ENCODE measurements at regions of chr19 and their contacts with region 1.

Region 1: GRCh38 chr19:7355151-7355820 is 6.5 kb downstream of the ARHGEF18 start:
- DNase-seq: no peak
- ATAC-seq: no peak
- H3K4me3 Mint-ChIP-seq: no peak overlapping the region
- H3K27ac Mint-ChIP-seq: no peak overlapping the region
- H3K4me1 Mint-ChIP-seq: peaks cover 45% of the 10 kb centered on the region
- H3K27me3 Mint-ChIP-seq: no peaks in the 10 kb centered on the region

Region 2: GRCh38 chr19:7326105-7326877 is 29.0 kb before region 1 on chr19:
- CTCF ChIA-PET with region 1: interaction called, 10 read pairs
- POLR2A ChIA-PET with region 1: no interaction called
- DNase-seq: peak; percentile 56
- ATAC-seq: no peak
- H3K4me3 Mint-ChIP-seq: no peak overlapping the region
- H3K27ac Mint-ChIP-seq: no peak overlapping the region
- H3K4me1 Mint-ChIP-seq: no peaks in the 10 kb centered on the region
- H3K27me3 Mint-ChIP-seq: peaks cover 2% of the 10 kb centered on the region

Region 3: DNA sequence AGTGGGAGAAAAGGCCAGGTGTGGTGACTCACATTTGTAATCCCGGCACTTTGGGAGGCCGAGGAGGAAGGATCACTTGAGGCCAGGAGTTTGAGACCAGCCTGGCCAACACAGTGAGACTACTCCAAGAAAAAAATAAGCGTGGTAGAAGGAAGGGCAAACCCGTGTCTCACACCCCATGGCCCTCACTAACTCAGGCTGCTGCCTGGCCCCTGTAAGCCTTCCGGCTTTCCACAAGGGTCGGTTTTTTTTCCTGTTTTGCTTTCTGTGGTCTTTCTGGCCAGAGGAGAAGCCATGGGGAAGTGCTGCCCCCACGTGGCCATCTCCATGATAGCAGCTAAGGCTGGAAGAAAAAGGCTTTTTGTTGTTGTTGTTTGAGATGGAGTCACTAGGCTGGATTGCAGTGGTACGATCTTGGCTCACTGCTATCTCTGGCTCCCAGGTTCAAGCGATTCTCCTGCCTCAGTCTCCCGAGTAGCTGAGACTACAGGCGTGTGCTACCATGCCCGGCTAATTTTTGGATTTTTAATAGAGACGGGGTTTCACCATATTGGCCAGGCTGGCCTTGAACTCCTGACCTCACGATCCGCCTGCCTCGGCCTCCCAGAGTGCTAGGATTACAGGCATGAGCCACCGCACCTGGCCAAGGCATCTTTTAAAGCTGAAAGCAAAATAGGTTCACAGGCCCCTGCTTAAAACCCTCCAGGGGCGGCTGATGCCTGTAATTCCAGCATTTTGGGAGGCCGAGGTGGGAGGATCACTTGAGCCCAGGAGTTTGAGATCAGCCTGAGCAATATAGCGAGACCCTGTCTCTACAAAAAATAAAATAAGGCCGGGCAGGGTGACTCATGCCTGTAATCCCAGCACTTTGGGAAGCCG is 14.1 kb before region 1 on chr19:
- CTCF ChIA-PET with region 1: interaction called, 22 read pairs
- POLR2A ChIA-PET with region 1: interaction called, 5 read pairs
- DNase-seq: peak; percentile 88
- ATAC-seq: peak; percentile 24
- H3K4me3 Mint-ChIP-seq: no peak overlapping the region
- H3K27ac Mint-ChIP-seq: peak overlapping the region; percentile 61
- H3K4me1 Mint-ChIP-seq: peaks cover 53% of the 10 kb centered on the region
- H3K27me3 Mint-ChIP-seq: no peaks in the 10 kb centered on the region

Region 4: GRCh38 chr19:7366701-7367420 is 11.6 kb after region 1 on chr19:
- CTCF ChIA-PET with region 1: interaction called, 26 read pairs
- POLR2A ChIA-PET with region 1: no interaction called
- DNase-seq: peak; percentile 54
- ATAC-seq: peak; percentile 67
- H3K4me3 Mint-ChIP-seq: no peak overlapping the region
- H3K27ac Mint-ChIP-seq: no peak overlapping the region
- H3K4me1 Mint-ChIP-seq: no peaks in the 10 kb centered on the region
- H3K27me3 Mint-ChIP-seq: no peaks in the 10 kb centered on the region

Region 5: GRCh38 chr19:7373862-7374261 is 18.6 kb after region 1 on chr19:
- CTCF ChIA-PET with region 1: interaction called, 17 read pairs
- POLR2A ChIA-PET with region 1: interaction called, 4 read pairs
- DNase-seq: no peak
- ATAC-seq: no peak
- H3K4me3 Mint-ChIP-seq: no peak overlapping the region
- H3K27ac Mint-ChIP-seq: no peak overlapping the region
- H3K4me1 Mint-ChIP-seq: no peaks in the 10 kb centered on the region
- H3K27me3 Mint-ChIP-seq: no peaks in the 10 kb centered on the region

Region 6: DNA sequence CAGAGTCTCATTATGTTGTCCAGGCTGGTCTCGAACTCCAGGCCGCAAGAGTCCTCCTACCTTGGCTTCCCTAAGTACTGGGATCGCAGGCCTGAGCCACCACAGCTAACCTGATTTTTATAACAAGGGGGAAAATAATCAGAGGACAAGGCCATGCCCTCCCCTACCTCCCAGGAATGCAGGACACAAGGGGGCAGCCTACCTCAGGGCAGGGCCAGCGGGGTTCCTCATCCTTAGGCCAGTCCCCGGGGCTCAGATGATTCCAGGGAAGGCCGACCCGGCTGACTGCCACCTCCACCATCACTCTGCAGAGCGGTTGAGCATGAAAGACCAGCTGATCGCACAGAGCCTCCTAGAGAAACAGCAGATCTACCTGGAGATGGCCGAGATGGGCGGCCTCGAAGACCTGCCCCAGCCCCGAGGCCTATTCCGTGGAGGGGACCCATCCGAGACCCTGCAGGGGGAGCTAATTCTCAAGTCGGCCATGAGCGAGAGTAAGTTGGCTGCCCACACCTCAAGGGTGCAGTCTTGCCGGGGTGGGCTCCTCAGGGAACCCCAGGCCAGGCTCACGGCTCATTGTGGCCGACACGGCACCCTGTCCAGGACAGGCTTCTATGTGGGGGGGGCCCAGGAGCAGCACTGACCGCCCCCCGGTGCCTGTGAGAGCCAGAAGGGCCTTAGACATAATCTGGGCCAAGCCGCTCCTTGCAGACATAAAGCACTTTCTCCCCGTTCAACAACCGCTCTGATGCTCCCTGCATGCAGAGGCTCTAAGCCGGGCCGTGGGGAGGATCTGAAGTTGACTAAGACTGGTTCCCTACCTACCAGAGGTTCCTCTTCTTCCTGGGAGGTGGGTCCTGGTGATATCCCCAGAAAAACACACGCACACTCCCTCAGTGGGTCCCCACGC is 106.8 kb after region 1 on chr19:
- CTCF ChIA-PET with region 1: no interaction called
- POLR2A ChIA-PET with region 1: no interaction called
- DNase-seq: no peak
- ATAC-seq: no peak
- H3K4me3 Mint-ChIP-seq: no peak overlapping the region
- H3K27ac Mint-ChIP-seq: no peak overlapping the region
- H3K4me1 Mint-ChIP-seq: no peaks in the 10 kb centered on the region
- H3K27me3 Mint-ChIP-seq: no peaks in the 10 kb centered on the region